Aorta (tissue), 5 donors: ENCODE measurements at regions of chr9 and their contacts with region 1.

Region 1: GRCh38 chr9:34899535-34900158 is 58.4 kb upstream of the PHF24 start:
- DNase-seq: peak; percentile 78 to 89
- ATAC-seq: peak; percentile 93
- H3K4me3 ChIP-seq: no peak overlapping the region
- H3K27ac ChIP-seq: no peak overlapping the region
- H3K4me1 ChIP-seq: no peaks in the 10 kb centered on the region
- H3K27me3 ChIP-seq: peaks cover 0 to 2% of the 10 kb centered on the region in 2 donors

Region 2: DNA sequence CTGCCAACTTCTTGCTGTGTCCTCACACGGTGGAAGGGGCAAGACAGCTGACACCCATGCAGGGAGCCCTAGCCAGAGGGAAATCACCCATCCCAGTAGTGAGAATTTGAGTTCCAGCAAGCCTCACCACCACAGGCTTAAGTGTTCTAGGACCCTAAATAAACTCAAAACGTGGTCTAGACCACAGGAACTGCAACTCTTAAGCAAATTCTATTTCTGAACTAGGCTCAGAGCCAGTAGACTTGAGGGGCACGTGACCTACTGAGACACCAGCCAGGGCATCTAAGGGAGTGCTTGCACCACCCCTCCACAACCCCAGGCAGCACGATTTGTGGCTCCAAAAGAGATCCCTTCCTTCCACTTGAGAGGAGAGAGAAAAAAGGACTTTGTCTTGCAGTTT is 37.6 kb before region 1 on chr9:
- intact Hi-C with region 1: no loop called
- DNase-seq: no peak
- ATAC-seq: no peak
- H3K4me3 ChIP-seq: no peak overlapping the region
- H3K27ac ChIP-seq: no peak overlapping the region
- H3K4me1 ChIP-seq: no peaks in the 10 kb centered on the region
- H3K27me3 ChIP-seq: no peaks in the 10 kb centered on the region

Region 3: GRCh38 chr9:34984049-34984448 is 84.4 kb after region 1 on chr9:
- intact Hi-C with region 1: loop called (anchors 2 to 5 kb)
- DNase-seq: no peak
- ATAC-seq: no peak
- H3K4me3 ChIP-seq: no peak overlapping the region
- H3K27ac ChIP-seq: no peak overlapping the region
- H3K4me1 ChIP-seq: no peaks in the 10 kb centered on the region
- H3K27me3 ChIP-seq: no peaks in the 10 kb centered on the region

Region 4: DNA sequence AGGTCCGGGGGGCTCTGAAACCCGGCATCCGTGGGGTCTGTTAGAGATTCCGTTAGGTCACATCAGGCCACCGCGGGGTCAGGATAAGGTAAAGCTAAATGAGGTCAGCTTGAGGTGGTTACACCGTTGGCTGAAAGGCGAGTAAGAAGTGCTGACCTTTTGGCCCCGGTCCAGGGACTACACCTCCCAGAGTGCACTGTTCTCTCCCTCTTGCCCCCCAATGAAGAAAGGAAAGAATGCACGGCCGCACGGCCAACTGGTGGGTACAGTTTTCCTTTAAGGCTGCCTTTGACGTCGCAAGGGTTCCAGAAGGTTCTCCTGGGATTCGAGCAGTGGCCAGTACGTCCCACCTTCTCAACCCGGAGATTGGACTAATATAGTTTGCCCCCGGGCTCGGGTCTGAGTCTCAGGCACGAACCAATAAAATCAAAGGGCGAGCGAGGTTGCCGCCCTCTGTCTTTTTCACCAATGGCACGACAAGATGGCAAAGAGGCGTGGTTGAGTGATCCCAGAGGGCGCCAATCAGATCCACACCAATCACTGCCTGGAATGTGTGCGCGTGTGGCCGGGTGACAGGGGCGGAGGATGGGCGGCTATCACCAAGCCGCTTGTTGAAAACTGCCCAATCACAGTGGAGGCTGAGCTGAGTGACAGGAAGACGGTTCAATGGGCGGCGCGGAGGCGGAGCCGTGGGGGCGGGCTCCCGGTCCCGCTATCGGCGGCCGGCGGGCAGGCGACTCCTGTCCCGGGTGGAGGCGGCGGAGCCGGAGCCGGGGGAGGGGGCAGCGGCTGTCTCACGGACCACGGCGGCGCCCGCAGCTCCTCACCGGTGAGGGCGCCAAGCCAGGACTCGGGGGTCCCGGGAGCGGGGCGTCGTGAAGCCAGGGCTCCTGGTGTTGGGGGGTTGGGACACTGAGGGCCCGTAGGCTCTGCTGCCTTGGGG is 89.6 kb after region 1 on chr9 and contains the start of gene DNAJB5:
- intact Hi-C with region 1: loop called (anchors 2 to 5 kb)
- DNase-seq: peak; percentile 99
- ATAC-seq: peak; percentile 94
- H3K4me3 ChIP-seq: peak within 1 kb of the TSS; percentile 80 to 92
- H3K27ac ChIP-seq: peak within 1 kb of the TSS; percentile 98
- H3K4me1 ChIP-seq: no peaks in the 10 kb centered on the region
- H3K27me3 ChIP-seq: no peaks in the 10 kb centered on the region
- total RNA-seq, gene DNAJB5: 33.7 to 96.0 TPM

Region 5: GRCh38 chr9:35051069-35051967 is 151.7 kb after region 1 on chr9:
- intact Hi-C with region 1: loop called in 1 of 2 experiments (anchors 5 kb)
- DNase-seq: no peak
- ATAC-seq: no peak
- H3K4me3 ChIP-seq: no peak overlapping the region
- H3K27ac ChIP-seq: no peak overlapping the region
- H3K4me1 ChIP-seq: no peaks in the 10 kb centered on the region
- H3K27me3 ChIP-seq: no peaks in the 10 kb centered on the region

Region 6: GRCh38 chr9:35096035-35096849 is 196.6 kb after region 1 on chr9 and contains the start of gene PIGO:
- intact Hi-C with region 1: loop called (anchors 1 to 10 kb)
- DNase-seq: peak; percentile 94 to 96
- ATAC-seq: peak; percentile 95
- H3K4me3 ChIP-seq: peak within 1 kb of the TSS; percentile 85 to 88
- H3K27ac ChIP-seq: peak within 1 kb of the TSS; percentile 80 to 99
- H3K4me1 ChIP-seq: no peaks in the 10 kb centered on the region
- H3K27me3 ChIP-seq: no peaks in the 10 kb centered on the region
- total RNA-seq, gene PIGO: 12.0 to 16.8 TPM

Region 7: DNA sequence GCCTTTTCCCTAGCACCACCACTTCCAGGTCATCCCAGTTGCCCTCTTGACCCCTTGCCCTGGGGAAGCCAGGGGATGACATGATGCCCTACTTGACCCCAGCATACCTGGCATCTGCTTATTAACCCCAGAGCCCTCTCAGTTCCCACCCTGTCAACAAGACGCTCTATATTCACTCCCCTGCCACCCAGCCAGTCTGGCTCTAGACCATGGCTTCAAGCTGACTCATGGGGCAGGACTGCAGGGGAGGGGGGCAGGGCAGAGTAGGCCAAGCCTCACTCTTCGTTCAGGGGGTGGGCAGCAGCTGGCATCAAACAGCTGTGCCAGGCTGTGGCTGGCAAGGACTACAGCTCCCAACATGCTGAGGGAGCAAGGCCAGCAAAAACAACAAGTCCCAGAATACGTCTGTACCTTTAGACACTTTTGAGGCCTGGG is 210.7 kb after region 1 on chr9:
- intact Hi-C with region 1: no loop called
- DNase-seq: peak; percentile 85 to 92
- ATAC-seq: no peak
- H3K4me3 ChIP-seq: peak overlapping the region; percentile 58 to 79
- H3K27ac ChIP-seq: peak overlapping the region in 1 of 2 donors; percentile 97
- H3K4me1 ChIP-seq: no peaks in the 10 kb centered on the region
- H3K27me3 ChIP-seq: no peaks in the 10 kb centered on the region

Region 8: DNA sequence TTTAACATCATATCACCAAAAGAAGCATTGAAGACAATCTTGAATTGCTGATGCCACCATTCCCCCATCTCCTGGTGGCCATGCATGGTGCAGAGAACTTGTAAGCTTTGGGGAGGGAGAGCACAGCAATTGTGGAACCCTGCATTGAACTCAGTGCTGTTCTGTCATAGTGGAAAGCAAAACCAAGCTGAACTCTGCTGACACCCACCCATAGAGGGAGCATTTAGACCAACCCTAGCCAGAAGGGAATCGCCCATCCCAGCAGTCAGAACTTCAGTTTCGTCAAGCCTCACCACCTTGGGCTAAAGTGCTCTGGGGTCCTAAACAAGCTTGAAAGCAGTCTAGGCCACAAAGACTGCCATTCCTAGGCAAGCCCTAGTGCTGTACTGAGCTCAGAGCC is 552.8 kb after region 1 on chr9:
- intact Hi-C with region 1: no loop called
- DNase-seq: no peak
- ATAC-seq: no peak
- H3K4me3 ChIP-seq: no peak overlapping the region
- H3K27ac ChIP-seq: no peak overlapping the region
- H3K4me1 ChIP-seq: no peaks in the 10 kb centered on the region
- H3K27me3 ChIP-seq: no peaks in the 10 kb centered on the region